PC-3 (cell line): ENCODE measurements at regions of chr5 and their contacts with region 1.

Region 1: DNA sequence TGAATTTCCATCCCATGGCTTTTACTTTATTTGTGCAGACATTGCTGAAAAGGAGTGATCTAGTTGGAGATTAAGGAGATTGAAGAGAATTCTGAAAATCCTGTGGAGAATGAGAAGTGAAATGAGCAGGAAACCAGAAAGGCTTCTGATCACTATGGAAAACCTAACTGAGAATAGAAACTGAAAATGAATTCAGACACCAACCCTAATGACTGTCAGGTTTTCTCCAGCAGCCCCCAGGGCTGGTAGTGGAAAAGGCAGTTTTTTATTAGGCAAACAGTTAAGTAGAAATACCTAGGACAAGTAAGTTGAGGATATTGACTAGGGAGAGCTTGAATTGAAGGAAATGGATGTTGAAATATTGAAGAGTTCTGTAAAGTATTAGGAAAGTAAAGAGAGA is 14.7 kb upstream of the ARRDC3 start:
- DNase-seq: no peak
- ATAC-seq: no peak
- H3K4me3 ChIP-seq: no peak overlapping the region
- H3K27ac ChIP-seq: no peak overlapping the region
- H3K4me1 ChIP-seq: no peaks in the 10 kb centered on the region
- H3K27me3 ChIP-seq: no peaks in the 10 kb centered on the region
- CTCF ChIP-seq: no peak

Region 2: DNA sequence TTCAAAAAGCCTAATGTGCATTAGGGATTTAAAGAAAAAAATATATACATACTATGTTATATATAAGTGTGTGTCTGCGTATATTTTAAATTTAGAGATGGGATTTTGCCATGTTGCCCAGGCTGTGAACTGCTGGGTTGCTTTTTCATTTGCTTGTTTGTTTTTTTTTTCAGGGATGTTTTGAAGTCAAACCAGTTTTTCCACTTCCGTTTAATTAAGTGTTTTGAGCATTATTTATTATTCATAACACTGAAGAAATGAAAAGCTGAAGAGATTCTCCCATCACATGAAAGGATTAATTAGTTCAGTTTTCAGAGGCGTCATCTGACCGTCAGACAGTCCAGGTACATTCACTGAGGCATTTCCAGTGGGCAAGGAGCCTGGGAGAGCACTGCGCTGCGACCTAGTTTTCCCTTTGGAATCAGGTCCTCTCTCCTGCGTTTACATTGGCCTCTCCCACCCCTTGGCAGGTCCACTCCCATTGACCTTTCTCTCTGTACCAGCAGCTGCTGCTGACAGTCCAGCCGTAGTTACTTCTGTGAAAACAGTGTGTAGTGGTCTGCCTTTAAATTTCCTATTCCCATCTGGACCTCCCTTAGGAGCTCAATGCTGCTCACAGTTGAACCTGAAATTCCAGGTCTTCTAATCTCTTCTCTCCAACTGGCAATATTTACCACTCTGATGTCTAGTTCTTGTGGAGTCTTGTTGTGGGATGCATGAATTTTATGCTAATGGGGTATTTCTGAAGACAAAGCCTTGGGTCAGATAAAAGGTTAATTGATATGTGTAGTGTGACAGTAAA is 40.6 kb before region 1 on chr5:
- CTCF ChIA-PET with region 1: no interaction called
- POLR2A ChIA-PET with region 1: interaction called, 12 read pairs
- intact Hi-C with region 1: no loop called
- DNase-seq: no peak
- ATAC-seq: no peak
- H3K4me3 ChIP-seq: no peak overlapping the region
- H3K27ac ChIP-seq: no peak overlapping the region
- H3K4me1 ChIP-seq: no peaks in the 10 kb centered on the region
- H3K27me3 ChIP-seq: no peaks in the 10 kb centered on the region
- CTCF ChIP-seq: no peak